A549 (cell line): ENCODE measurements at regions of chr6 and their contacts with region 1.

Region 1: GRCh38 chr6:70413114-70413991 is at the start of gene FAM135A:
- DNase-seq: peak; percentile 76 to 98
- ATAC-seq: peak; percentile 92 to 95
- H3K4me3 ChIP-seq: peak within 1 kb of the TSS; percentile 77
- H3K27ac ChIP-seq: peak within 1 kb of the TSS; percentile 94 to 96
- H3K4me1 ChIP-seq: peaks cover 26% of the 10 kb centered on the region; the same call in 2 of the 3 replicates
- CTCF ChIP-seq: no peak
- EP300 ChIP-seq: no peak
- POLR2A ChIP-seq: peak; percentile 80
- RAD21 ChIP-seq: no peak
- polyA plus RNA-seq, gene FAM135A: 24.6 and 33.6 TPM in 2 replicates

Region 2: DNA sequence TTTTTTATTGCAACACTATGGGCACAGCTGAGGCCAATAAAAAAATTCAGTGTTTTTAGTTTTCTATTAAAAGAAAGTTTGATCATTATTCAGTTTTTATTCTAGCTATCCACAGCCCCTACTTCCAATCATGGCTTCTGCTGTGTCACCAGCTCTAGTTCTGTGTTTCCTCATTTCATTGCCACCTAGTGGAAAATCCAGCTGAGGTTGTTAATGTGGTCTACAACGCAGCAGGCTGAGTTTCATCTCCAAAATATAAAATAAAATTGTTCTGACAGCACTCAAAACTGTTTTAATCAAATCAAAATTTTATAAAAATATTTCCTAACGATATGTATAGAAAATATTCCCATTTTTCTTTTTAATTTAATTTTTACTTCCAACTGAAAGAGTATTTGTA is 124.1 kb before region 1 on chr6:
- CTCF ChIA-PET with region 1: no interaction called
- POLR2A ChIA-PET with region 1: no interaction called
- DNase-seq: peak in 1 of 2 experiments; percentile 11
- ATAC-seq: peak in 1 of 2 experiments; percentile 57; a peak in 2 of 6 replicates
- H3K4me3 ChIP-seq: no peak overlapping the region
- H3K27ac ChIP-seq: no peak overlapping the region
- H3K4me1 ChIP-seq: no peaks in the 10 kb centered on the region
- CTCF ChIP-seq: peak; percentile 9; the same call in 1 of the 3 replicates
- EP300 ChIP-seq: no peak
- POLR2A ChIP-seq: no peak
- RAD21 ChIP-seq: no peak

Region 3: DNA sequence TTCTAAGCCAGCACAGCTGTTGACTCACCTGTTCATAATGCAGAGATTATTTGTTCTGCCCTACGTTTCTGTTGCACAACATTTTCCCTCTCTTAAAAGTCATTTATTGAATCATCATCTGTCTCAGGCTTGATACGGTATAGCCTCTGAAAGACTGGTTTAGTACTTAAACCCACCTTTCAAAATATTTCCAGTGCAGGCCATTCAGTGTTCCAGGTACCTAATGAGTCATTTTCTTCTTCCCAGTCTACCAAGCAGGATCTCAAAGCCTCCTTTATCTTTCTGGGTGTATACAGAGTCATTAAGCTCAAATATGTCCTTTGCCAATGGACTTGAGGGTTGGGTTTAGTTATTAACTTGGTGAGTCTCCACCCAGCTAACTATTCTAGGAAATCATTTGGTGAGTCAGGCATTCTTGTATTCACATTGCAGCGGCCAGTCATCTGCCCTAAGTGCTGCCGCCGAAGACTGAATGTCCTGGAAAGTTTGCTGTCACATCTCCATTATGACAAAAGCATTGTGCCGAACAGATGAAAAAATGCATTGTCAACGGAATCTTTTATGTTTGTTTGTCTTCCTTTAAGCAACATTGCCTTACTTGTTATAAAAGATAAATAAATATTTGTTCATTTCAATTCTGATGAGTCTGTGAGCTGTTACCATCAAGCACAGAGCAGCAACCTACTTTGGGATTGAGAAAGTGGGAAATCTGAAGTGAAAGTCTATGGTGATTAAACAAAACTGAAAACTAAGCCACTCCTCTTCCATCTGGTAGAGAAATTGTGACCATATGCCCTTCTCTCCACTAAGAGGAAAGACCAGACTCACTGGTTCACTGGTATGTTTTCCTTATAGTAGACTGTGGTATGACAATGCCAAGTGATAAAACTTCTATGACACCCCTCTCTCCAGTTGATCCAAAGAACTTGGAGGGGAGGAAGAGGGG is 14.3 kb before region 1 on chr6:
- CTCF ChIA-PET with region 1: interaction called, 3 read pairs
- POLR2A ChIA-PET with region 1: interaction called, 59 read pairs
- DNase-seq: peak; percentile 68 to 92
- ATAC-seq: peak; percentile 97 to 98
- H3K4me3 ChIP-seq: peak overlapping the region; percentile 38
- H3K27ac ChIP-seq: peak overlapping the region; percentile 93
- H3K4me1 ChIP-seq: peaks cover 47% of the 10 kb centered on the region
- CTCF ChIP-seq: no peak
- EP300 ChIP-seq: peak in 1 of 2 experiments; percentile 51; a peak in 2 of 5 replicates
- POLR2A ChIP-seq: no peak
- RAD21 ChIP-seq: 0 out of 5 replicates have a peak, but pooled peaks of 1 of the 2 experiments have one; percentile 23